Activated CD4-positive, alpha-beta memory T cell treated with anti-CD3 and anti-CD28 coated beads, Interleukin-2, amount 10 ng/mL, durations not matched to agents 7 days and 5 days (primary cell): ENCODE measurements at regions of chr1 and their contacts with region 1.

Region 1: DNA sequence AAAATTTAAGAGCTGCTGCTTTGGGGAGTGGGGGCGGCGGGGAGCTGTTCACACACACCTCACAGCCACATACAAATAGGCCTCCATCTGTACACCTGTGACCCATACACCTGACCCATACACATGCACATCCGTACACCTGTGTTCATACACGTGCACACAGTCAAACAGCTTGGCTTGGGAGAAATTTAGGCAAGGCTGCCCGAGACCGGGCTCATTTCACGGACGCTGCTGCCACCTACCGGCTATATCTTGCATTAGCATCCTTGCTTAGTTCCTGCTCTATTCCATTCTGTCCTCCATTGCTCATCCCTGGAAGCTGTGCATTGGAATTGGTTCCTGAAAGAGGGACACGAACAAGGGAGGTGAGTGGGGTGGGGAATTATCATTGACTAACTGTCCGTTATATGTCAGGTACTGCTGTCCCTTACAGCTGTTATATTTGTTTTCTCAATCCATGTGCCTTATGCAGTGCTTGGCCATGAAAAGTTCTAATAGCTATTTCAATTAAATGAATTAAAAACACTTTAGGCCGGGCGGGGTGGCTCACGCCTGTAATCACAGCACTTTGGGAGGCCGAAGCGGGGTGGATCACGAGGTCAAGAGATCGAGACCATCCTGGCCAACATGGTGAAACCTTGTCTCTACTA is 37.1 kb upstream of the EPB41 start:
- DNase-seq: peak; percentile 81
- H3K4me3 Mint-ChIP-seq: no peak overlapping the region
- H3K27ac Mint-ChIP-seq: no peak overlapping the region
- H3K4me1 Mint-ChIP-seq: peaks cover 6% of the 10 kb centered on the region
- H3K27me3 Mint-ChIP-seq: peaks cover 4% of the 10 kb centered on the region

Region 2: DNA sequence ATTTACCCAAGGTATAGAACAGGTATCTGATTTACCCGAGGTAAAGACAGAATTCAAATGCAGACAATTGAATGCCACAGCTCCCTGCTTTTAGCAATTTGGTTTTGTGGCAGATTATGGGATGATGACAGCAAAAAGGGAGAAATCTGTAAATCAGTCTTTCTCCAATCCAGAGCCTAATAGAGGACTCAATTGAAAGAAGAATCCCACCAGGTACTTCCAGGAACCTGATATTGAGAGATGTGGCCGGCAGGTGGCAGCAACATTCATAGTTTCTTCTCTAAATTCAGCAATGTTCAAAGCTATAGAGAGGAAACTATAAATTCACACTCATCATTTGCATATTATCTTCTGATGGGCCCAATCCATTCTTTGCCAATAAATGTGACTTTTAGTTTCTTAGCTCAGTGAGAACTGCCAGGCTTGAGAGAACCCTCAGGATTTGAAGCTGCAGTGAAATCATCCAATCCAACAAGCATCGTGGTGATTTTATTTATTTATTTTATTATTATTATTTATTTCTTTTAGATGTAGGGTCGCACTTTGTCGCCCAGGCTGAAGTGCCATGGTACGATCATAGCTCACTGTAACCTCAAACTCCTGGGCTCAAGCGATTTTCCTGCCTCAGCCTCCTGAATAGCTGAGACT is 517.5 kb before region 1 on chr1:
- CTCF ChIA-PET with region 1: interaction called, 19 read pairs
- POLR2A ChIA-PET with region 1: no interaction called
- DNase-seq: peak; percentile 79
- H3K4me3 Mint-ChIP-seq: no peak overlapping the region
- H3K27ac Mint-ChIP-seq: no peak overlapping the region
- H3K4me1 Mint-ChIP-seq: peaks cover 7% of the 10 kb centered on the region
- H3K27me3 Mint-ChIP-seq: peaks cover 6% of the 10 kb centered on the region

Region 3: DNA sequence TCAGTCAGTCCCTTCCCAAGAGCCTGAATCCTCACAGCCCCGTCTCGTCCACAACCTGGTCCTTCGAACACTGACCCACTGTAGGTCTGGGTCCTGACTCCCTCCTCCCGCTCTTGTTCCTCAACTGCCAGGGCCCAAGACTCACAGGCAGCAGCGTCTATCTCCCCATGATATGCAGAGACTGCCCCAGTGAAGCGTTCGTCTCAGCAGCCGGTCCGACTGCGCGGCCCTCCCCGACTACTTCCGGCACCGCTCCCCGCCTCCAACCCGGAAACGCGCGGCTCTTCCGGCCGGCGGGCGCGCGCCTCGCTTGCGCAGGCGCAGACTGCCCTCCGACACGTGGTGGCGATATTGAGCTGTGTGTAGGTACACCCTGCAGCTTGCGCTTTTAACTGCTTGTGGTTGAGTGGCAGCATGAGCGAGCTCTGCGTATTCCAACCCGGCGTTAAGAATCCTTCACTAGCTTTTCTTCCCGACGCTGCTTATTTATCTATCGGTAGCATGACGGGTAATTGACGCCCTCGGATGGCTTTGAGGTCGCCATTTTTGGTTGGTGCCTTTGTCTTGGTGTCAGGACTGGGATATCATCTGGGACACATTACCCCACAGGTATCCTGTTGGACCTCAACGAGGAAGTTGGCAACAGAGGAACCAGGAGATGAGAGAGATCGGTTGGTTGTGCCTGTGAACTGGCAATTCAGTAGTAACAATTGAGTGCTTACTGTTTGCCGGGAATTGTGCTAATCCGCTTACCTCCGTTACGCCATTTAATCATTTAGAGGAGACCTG is 234.2 kb before region 1 on chr1 and contains the start of gene TAF12:
- CTCF ChIA-PET with region 1: interaction called, 23 read pairs
- POLR2A ChIA-PET with region 1: interaction called, 12 read pairs
- DNase-seq: peak; percentile 95
- H3K4me3 Mint-ChIP-seq: peak within 1 kb of the TSS; percentile 96
- H3K27ac Mint-ChIP-seq: peak within 1 kb of the TSS; percentile 96
- H3K4me1 Mint-ChIP-seq: peaks cover 54% of the 10 kb centered on the region
- H3K27me3 Mint-ChIP-seq: no peaks in the 10 kb centered on the region
- total RNA-seq, gene TAF12: 33.8 to 34.0 TPM

Region 4: DNA sequence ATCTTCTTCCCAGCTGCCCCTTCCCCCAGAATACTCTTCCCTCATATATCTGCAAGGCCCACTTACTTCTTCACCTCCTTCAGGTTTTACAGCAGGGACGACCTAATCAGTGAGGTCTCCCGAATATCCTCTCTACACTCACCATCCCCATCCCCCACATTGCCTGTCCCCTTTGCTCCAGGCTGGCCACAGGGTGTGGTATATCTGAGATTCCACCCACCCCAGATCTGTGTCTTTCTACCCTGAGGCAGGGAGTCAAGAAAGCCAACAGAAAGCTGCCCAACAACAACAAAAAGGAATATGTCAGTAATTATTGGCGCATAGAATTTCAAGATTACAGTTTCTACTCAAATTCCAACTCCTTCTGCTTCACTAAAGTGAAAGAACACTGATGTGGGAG is 95.2 kb before region 1 on chr1:
- CTCF ChIA-PET with region 1: interaction called, 99 read pairs
- POLR2A ChIA-PET with region 1: interaction called, 7 read pairs
- DNase-seq: no peak
- H3K4me3 Mint-ChIP-seq: no peak overlapping the region
- H3K27ac Mint-ChIP-seq: no peak overlapping the region
- H3K4me1 Mint-ChIP-seq: peaks cover 7% of the 10 kb centered on the region
- H3K27me3 Mint-ChIP-seq: peaks cover 12% of the 10 kb centered on the region

Region 5: GRCh38 chr1:28860332-28861073 is 16.8 kb before region 1 on chr1:
- CTCF ChIA-PET with region 1: interaction called, 19 read pairs
- POLR2A ChIA-PET with region 1: no interaction called
- DNase-seq: no peak
- H3K4me3 Mint-ChIP-seq: no peak overlapping the region
- H3K27ac Mint-ChIP-seq: no peak overlapping the region
- H3K4me1 Mint-ChIP-seq: no peaks in the 10 kb centered on the region
- H3K27me3 Mint-ChIP-seq: peaks cover 5% of the 10 kb centered on the region

Region 6: GRCh38 chr1:28865997-28866650 is 11.1 kb before region 1 on chr1:
- CTCF ChIA-PET with region 1: interaction called, 19 read pairs
- POLR2A ChIA-PET with region 1: interaction called, 3 read pairs
- DNase-seq: no peak
- H3K4me3 Mint-ChIP-seq: no peak overlapping the region
- H3K27ac Mint-ChIP-seq: no peak overlapping the region
- H3K4me1 Mint-ChIP-seq: no peaks in the 10 kb centered on the region
- H3K27me3 Mint-ChIP-seq: peaks cover 7% of the 10 kb centered on the region

Region 7: GRCh38 chr1:29202584-29203340 is 325.5 kb after region 1 on chr1:
- CTCF ChIA-PET with region 1: interaction called, 171 read pairs
- POLR2A ChIA-PET with region 1: interaction called, 4 read pairs
- DNase-seq: peak; percentile 90
- H3K4me3 Mint-ChIP-seq: no peak overlapping the region
- H3K27ac Mint-ChIP-seq: no peak overlapping the region
- H3K4me1 Mint-ChIP-seq: peaks cover 6% of the 10 kb centered on the region
- H3K27me3 Mint-ChIP-seq: no peaks in the 10 kb centered on the region